Heart right ventricle (tissue), 16 donors: ENCODE measurements at regions of chr3 and their contacts with region 1.

Region 1: GRCh38 chr3:106212665-106213222 is 343.9 kb upstream of the CBLB start:
- DNase-seq: no peak
- ATAC-seq: no peak
- H3K4me3 ChIP-seq: no peak overlapping the region
- H3K27ac ChIP-seq: no peak overlapping the region
- H3K4me1 ChIP-seq: peaks cover 0 to 16% (median 11%) of the 10 kb centered on the region in 9 donors
- H3K27me3 ChIP-seq: no peaks in the 10 kb centered on the region
- CTCF ChIP-seq: no peak

Region 2: GRCh38 chr3:105679951-105680350 is 532.8 kb before region 1 on chr3:
- intact Hi-C with region 1: loop called in 6 of 10 experiments (anchors 5 to 10 kb)
- DNase-seq: no peak
- ATAC-seq: no peak
- H3K4me3 ChIP-seq: no peak overlapping the region
- H3K27ac ChIP-seq: no peak overlapping the region
- H3K4me1 ChIP-seq: peaks cover 0 to 6% (median 3%) of the 10 kb centered on the region in 9 donors
- H3K27me3 ChIP-seq: no peaks in the 10 kb centered on the region
- CTCF ChIP-seq: no peak